ENCODE measurements at regions of chr18 and their contacts with region 1.

Region 1: DNA sequence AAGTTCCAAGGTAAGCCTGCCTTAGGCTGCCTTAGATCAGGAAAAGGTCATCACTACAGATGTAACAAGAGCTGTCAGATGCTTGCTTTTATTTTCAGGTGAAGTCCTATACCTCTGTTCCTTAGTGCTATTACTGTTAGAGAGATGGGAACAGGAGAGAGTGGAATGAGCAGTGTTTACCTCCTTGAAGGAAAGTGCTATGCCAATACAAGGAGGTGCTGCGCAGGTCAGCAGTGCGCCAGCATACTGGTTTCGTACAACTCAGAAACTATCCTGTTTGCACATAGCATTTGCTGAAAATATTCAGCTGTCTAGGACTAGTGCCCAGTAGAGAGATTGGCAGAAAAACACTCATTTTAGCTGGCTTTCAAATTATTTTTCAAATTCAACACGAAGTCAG is 413.0 kb upstream of the RAB12 start:
- DNase-seq: no peak
- H3K4me3 ChIP-seq: no peak overlapping the region
- H3K27ac ChIP-seq: no peak overlapping the region
- H3K4me1 ChIP-seq: no peaks in the 10 kb centered on the region
- H3K27me3 ChIP-seq: no peaks in the 10 kb centered on the region
- CTCF ChIP-seq: no peak

Region 2: GRCh38 chr18:7642331-7642890 is 553.8 kb before region 1 on chr18:
- intact Hi-C with region 1: loop called (anchors 5 kb)
- DNase-seq: no peak
- H3K4me3 ChIP-seq: no peak overlapping the region
- H3K27ac ChIP-seq: no peak overlapping the region
- H3K4me1 ChIP-seq: no peaks in the 10 kb centered on the region
- H3K27me3 ChIP-seq: no peaks in the 10 kb centered on the region
- CTCF ChIP-seq: no peak